Activated CD4-positive, alpha-beta T cell treated with anti-CD3 and anti-CD28 coated beads, Interleukin-2, amount 10 ng/mL, durations not matched to agents 7 days and 5 days (primary cell): ENCODE measurements at regions of chr4 and their contacts with region 1.

Region 1: GRCh38 chr4:10186228-10187214 is 69.9 kb upstream of the WDR1 start:
- DNase-seq: no peak
- H3K4me3 Mint-ChIP-seq: no peak overlapping the region
- H3K27ac Mint-ChIP-seq: no peak overlapping the region
- H3K4me1 Mint-ChIP-seq: peaks cover 36% of the 10 kb centered on the region
- H3K27me3 Mint-ChIP-seq: no peaks in the 10 kb centered on the region

Region 2: GRCh38 chr4:10164877-10165283 is 21.6 kb before region 1 on chr4:
- CTCF ChIA-PET with region 1: interaction called, 13 read pairs
- POLR2A ChIA-PET with region 1: no interaction called
- DNase-seq: no peak
- H3K4me3 Mint-ChIP-seq: no peak overlapping the region
- H3K27ac Mint-ChIP-seq: no peak overlapping the region
- H3K4me1 Mint-ChIP-seq: peaks cover 15% of the 10 kb centered on the region
- H3K27me3 Mint-ChIP-seq: no peaks in the 10 kb centered on the region

Region 3: GRCh38 chr4:10470505-10470904 is 284.0 kb after region 1 on chr4:
- CTCF ChIA-PET with region 1: no interaction called
- POLR2A ChIA-PET with region 1: no interaction called
- DNase-seq: no peak
- H3K4me3 Mint-ChIP-seq: no peak overlapping the region
- H3K27ac Mint-ChIP-seq: no peak overlapping the region
- H3K4me1 Mint-ChIP-seq: no peaks in the 10 kb centered on the region
- H3K27me3 Mint-ChIP-seq: peaks cover 2% of the 10 kb centered on the region